Caco-2 (cell line): ENCODE measurements at regions of chr2 and their contacts with region 1.

Region 1: GRCh38 chr2:100610381-100610831 is 47.6 kb downstream of the PDCL3 start:
- DNase-seq: peak; percentile 74 to 79
- H3K4me3 ChIP-seq: no peak overlapping the region
- H3K4me3 Mint-ChIP-seq: no peak overlapping the region
- H3K27ac Mint-ChIP-seq: no peak overlapping the region
- H3K4me1 ChIP-seq: no peaks in the 10 kb centered on the region
- H3K4me1 Mint-ChIP-seq: no peaks in the 10 kb centered on the region
- H3K27me3 ChIP-seq: no peaks in the 10 kb centered on the region
- H3K27me3 Mint-ChIP-seq: peaks cover 12% of the 10 kb centered on the region
- CTCF ChIP-seq: peak; percentile 71 to 74

Region 2: GRCh38 chr2:100640431-100641124 is 30.2 kb after region 1 on chr2:
- CTCF ChIA-PET with region 1: no interaction called
- POLR2A ChIA-PET with region 1: no interaction called
- intact Hi-C with region 1: no loop called
- DNase-seq: no peak
- H3K4me3 ChIP-seq: no peak overlapping the region
- H3K4me3 Mint-ChIP-seq: no peak overlapping the region
- H3K27ac Mint-ChIP-seq: no peak overlapping the region
- H3K4me1 ChIP-seq: no peaks in the 10 kb centered on the region
- H3K4me1 Mint-ChIP-seq: no peaks in the 10 kb centered on the region
- H3K27me3 ChIP-seq: no peaks in the 10 kb centered on the region
- H3K27me3 Mint-ChIP-seq: peaks cover 23% of the 10 kb centered on the region
- CTCF ChIP-seq: no peak

Region 3: GRCh38 chr2:100653449-100654035 is 43.1 kb after region 1 on chr2:
- CTCF ChIA-PET with region 1: no interaction called
- POLR2A ChIA-PET with region 1: no interaction called
- intact Hi-C with region 1: no loop called
- DNase-seq: no peak
- H3K4me3 ChIP-seq: no peak overlapping the region
- H3K4me3 Mint-ChIP-seq: no peak overlapping the region
- H3K27ac Mint-ChIP-seq: no peak overlapping the region
- H3K4me1 ChIP-seq: no peaks in the 10 kb centered on the region
- H3K4me1 Mint-ChIP-seq: no peaks in the 10 kb centered on the region
- H3K27me3 ChIP-seq: no peaks in the 10 kb centered on the region
- H3K27me3 Mint-ChIP-seq: peaks cover 5% of the 10 kb centered on the region
- CTCF ChIP-seq: no peak

Region 4: GRCh38 chr2:100718065-100718629 is 107.7 kb after region 1 on chr2:
- CTCF ChIA-PET with region 1: no interaction called
- POLR2A ChIA-PET with region 1: no interaction called
- intact Hi-C with region 1: loop called (anchors 5 kb)
- DNase-seq: peak; percentile 14 to 49
- H3K4me3 ChIP-seq: no peak overlapping the region
- H3K4me3 Mint-ChIP-seq: no peak overlapping the region
- H3K27ac Mint-ChIP-seq: no peak overlapping the region
- H3K4me1 ChIP-seq: peaks cover 7% of the 10 kb centered on the region; the same call in 1 of the 2 replicates
- H3K4me1 Mint-ChIP-seq: no peaks in the 10 kb centered on the region
- H3K27me3 ChIP-seq: no peaks in the 10 kb centered on the region
- H3K27me3 Mint-ChIP-seq: peaks cover 5% of the 10 kb centered on the region
- CTCF ChIP-seq: no peak

Region 5: GRCh38 chr2:100781523-100782379 is 171.3 kb after region 1 on chr2:
- CTCF ChIA-PET with region 1: no interaction called
- POLR2A ChIA-PET with region 1: no interaction called
- intact Hi-C with region 1: no loop called
- DNase-seq: no peak
- H3K4me3 ChIP-seq: no peak overlapping the region
- H3K4me3 Mint-ChIP-seq: no peak overlapping the region
- H3K27ac Mint-ChIP-seq: peak overlapping the region; percentile 63
- H3K4me1 ChIP-seq: peaks cover 36% of the 10 kb centered on the region
- H3K4me1 Mint-ChIP-seq: peaks cover 9% of the 10 kb centered on the region
- H3K27me3 ChIP-seq: no peaks in the 10 kb centered on the region
- H3K27me3 Mint-ChIP-seq: no peaks in the 10 kb centered on the region
- CTCF ChIP-seq: no peak

Region 6: DNA sequence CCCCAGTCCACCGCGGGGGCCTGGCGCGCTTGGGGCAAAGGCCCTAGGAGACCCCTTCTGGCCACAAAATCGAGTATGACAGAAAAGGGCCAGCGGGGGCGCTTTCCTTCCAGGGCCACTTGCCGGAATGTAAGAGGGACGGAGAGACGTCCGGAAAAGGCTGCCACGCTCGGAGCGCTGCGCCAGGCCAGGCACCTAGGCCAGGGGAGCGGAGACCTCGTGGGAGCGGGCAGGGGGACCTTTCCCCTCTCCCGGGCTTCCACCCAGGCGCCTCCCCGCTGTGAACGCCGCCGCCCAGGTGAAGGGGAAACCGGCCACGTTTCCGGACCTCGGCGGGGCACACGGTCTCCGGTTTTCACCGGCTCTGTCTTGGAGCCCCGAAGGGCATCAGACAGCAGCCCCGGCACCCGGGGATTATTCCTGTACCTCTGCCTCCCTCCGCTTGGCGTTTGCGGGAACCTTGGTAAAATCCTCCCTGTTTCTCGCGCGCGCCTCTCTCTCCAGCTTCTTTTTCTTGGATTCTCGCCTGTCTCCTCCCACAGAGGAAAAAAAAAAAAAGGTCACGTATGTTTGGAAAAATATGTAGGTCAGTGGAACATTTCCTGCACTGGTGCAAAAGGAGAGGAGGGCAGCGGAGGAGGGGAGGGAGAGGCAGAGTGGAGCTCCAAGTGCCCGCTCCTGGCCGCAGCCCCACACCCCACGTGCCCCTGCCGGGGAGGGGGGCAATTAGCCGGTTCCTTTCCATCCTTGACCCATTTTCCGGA is 208.4 kb after region 1 on chr2:
- CTCF ChIA-PET with region 1: interaction called, 10 read pairs
- POLR2A ChIA-PET with region 1: no interaction called
- intact Hi-C with region 1: no loop called
- DNase-seq: peak; percentile 59 to 63
- H3K4me3 ChIP-seq: peak overlapping the region; percentile 44
- H3K4me3 Mint-ChIP-seq: peak overlapping the region; percentile 82
- H3K27ac Mint-ChIP-seq: no peak overlapping the region
- H3K4me1 ChIP-seq: 0 out of 2 replicates have a peak, but pooled peaks cover 5% of the 10 kb centered on the region
- H3K4me1 Mint-ChIP-seq: peaks cover 7% of the 10 kb centered on the region
- H3K27me3 ChIP-seq: no peaks in the 10 kb centered on the region; the same call in 1 of the 2 replicates
- H3K27me3 Mint-ChIP-seq: peaks cover 29% of the 10 kb centered on the region
- CTCF ChIP-seq: peak; percentile 32 to 69

Region 7: GRCh38 chr2:101197215-101197745 is 586.9 kb after region 1 on chr2:
- CTCF ChIA-PET with region 1: interaction called, 12 read pairs
- POLR2A ChIA-PET with region 1: no interaction called
- intact Hi-C with region 1: no loop called
- DNase-seq: no peak
- H3K4me3 ChIP-seq: no peak overlapping the region
- H3K4me3 Mint-ChIP-seq: no peak overlapping the region
- H3K27ac Mint-ChIP-seq: no peak overlapping the region
- H3K4me1 ChIP-seq: no peaks in the 10 kb centered on the region
- H3K4me1 Mint-ChIP-seq: no peaks in the 10 kb centered on the region
- H3K27me3 ChIP-seq: no peaks in the 10 kb centered on the region
- H3K27me3 Mint-ChIP-seq: no peaks in the 10 kb centered on the region
- CTCF ChIP-seq: peak; percentile 7 to 28